Naive thymus-derived CD4-positive, alpha-beta T cell (primary cell): ENCODE measurements at regions of chr1 and their contacts with region 1.

Region 1: GRCh38 chr1:37859507-37860345 is at the start of gene MTF1:
- DNase-seq: peak; percentile 85 to 98 (median 97)
- ATAC-seq: peak; percentile 99
- H3K4me3 ChIP-seq: peak within 1 kb of the TSS; percentile 94
- H3K4me3 Mint-ChIP-seq: peak within 1 kb of the TSS; percentile 89 to 100 (median 96)
- H3K27ac ChIP-seq: peak within 1 kb of the TSS; percentile 89
- H3K27ac Mint-ChIP-seq: peak within 1 kb of the TSS; percentile 90 to 99 (median 95)
- H3K4me1 ChIP-seq: peaks cover 12 to 19% of the 10 kb centered on the region in 2 donors
- H3K4me1 Mint-ChIP-seq: peaks cover 26 to 39% (median 33%) of the 10 kb centered on the region in 7 donors
- H3K27me3 ChIP-seq: no peaks in the 10 kb centered on the region
- H3K27me3 Mint-ChIP-seq: no peaks in the 10 kb centered on the region
- total RNA-seq, gene MTF1: 22.9 to 45.2 (median 27.1) TPM

Region 2: DNA sequence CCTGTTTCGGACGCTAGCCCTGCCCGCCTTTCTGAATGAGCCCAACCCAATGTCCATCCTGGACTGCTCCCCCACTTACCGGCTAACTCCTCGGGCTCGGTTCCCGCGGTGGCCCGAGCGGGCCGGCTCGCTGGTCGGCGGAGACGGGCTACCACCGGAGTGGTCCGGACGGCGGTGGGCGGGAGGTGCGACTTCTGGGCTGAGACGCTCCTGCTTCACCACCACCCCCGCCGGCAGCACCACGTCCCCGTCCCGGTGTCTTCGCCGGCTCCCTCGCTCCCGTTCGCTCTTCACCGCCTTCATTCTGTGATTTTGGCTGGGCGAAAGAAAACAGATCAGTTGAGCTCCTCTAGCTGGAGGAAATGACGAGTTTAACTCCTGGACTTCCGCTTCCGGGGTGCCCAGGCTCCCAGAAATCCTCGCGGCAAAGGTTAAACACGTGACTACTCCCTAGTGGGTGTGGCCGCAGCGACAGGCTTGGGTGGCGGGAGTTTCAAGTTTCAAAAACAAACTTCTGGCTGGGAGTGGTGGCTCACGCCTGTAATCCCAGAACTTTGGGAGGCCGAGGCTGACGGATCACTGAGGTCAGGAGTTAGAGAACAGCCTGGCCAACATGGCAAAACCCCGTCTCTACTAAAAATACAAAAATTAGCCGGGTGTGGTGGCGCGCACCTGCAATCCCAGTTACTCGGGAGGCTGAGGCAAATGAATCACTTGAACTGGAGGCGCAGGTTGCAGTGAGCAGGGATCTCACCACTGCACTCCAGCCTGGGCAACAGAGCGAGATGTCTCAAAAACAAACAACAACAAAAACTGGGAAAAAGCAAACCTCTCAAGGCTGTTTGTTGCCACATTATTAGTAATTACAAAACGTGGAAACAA is 305.6 kb before region 1 on chr1 and contains the start of gene SNIP1:
- CTCF ChIA-PET with region 1: no interaction called
- POLR2A ChIA-PET with region 1: no interaction called
- intact Hi-C with region 1: loop called in 1 of 2 experiments (anchors 1 kb)
- DNase-seq: peak; percentile 67 to 94 (median 92)
- ATAC-seq: peak; percentile 99
- H3K4me3 ChIP-seq: peak within 1 kb of the TSS; percentile 92
- H3K4me3 Mint-ChIP-seq: peak within 1 kb of the TSS; percentile 97 to 100 (median 99)
- H3K27ac ChIP-seq: peak within 1 kb of the TSS; percentile 94
- H3K27ac Mint-ChIP-seq: peak within 1 kb of the TSS; percentile 91 to 99 (median 98)
- H3K4me1 ChIP-seq: peaks cover 10 to 24% of the 10 kb centered on the region in 2 donors
- H3K4me1 Mint-ChIP-seq: peaks cover 23 to 51% (median 45%) of the 10 kb centered on the region in 7 donors
- H3K27me3 ChIP-seq: no peaks in the 10 kb centered on the region
- H3K27me3 Mint-ChIP-seq: peaks cover 0 to 6% (median 0%) of the 10 kb centered on the region in 5 donors
- total RNA-seq, gene SNIP1: 27.8 to 53.6 (median 36.7) TPM

Region 3: GRCh38 chr1:37622131-37622530 is 237.6 kb before region 1 on chr1:
- CTCF ChIA-PET with region 1: no interaction called
- POLR2A ChIA-PET with region 1: no interaction called
- intact Hi-C with region 1: no loop called
- DNase-seq: no peak
- ATAC-seq: no peak
- H3K4me3 ChIP-seq: no peak overlapping the region
- H3K4me3 Mint-ChIP-seq: no peak overlapping the region
- H3K27ac ChIP-seq: no peak overlapping the region
- H3K27ac Mint-ChIP-seq: no peak overlapping the region
- H3K4me1 ChIP-seq: no peaks in the 10 kb centered on the region
- H3K4me1 Mint-ChIP-seq: peaks cover 0 to 1% (median 0%) of the 10 kb centered on the region in 7 donors
- H3K27me3 ChIP-seq: no peaks in the 10 kb centered on the region
- H3K27me3 Mint-ChIP-seq: peaks cover 34 to 44% (median 39%) of the 10 kb centered on the region in 5 donors

Region 4: GRCh38 chr1:37931361-37932158 is 71.8 kb after region 1 on chr1:
- CTCF ChIA-PET with region 1: interaction called, 5 read pairs
- POLR2A ChIA-PET with region 1: no interaction called
- intact Hi-C with region 1: loop called (anchors 2 kb)
- DNase-seq: peak; percentile 92 to 97 (median 96)
- ATAC-seq: peak; percentile 100
- H3K4me3 ChIP-seq: peak overlapping the region; percentile 67
- H3K4me3 Mint-ChIP-seq: peak overlapping the region; percentile 89 to 99 (median 98)
- H3K27ac ChIP-seq: peak overlapping the region; percentile 79
- H3K27ac Mint-ChIP-seq: peak overlapping the region; percentile 78 to 94 (median 87)
- H3K4me1 ChIP-seq: peaks cover 15 to 17% of the 10 kb centered on the region in 2 donors
- H3K4me1 Mint-ChIP-seq: peaks cover 22 to 52% (median 39%) of the 10 kb centered on the region in 7 donors
- H3K27me3 ChIP-seq: no peaks in the 10 kb centered on the region
- H3K27me3 Mint-ChIP-seq: peaks cover 0 to 3% (median 0%) of the 10 kb centered on the region in 5 donors

Region 5: DNA sequence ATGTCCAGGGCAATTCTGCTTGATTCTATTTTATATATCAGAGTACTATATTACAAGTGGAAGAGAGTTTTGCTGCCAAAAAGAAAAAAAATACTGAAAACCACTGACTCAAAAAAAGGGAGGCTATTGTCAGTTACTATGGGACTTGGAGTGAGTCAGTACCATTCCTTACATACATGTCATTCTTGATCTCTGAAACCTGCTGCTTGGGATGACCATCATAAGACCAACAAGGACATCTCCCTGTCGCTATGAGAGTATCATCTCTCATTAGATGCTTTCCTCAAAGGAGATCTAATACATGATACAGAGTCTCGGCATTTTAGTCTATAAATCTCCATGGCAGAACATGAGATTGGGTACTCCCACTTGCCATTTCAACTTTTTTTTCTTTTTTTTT is 99.0 kb after region 1 on chr1:
- CTCF ChIA-PET with region 1: no interaction called
- POLR2A ChIA-PET with region 1: no interaction called
- intact Hi-C with region 1: no loop called
- DNase-seq: no peak
- ATAC-seq: no peak
- H3K4me3 ChIP-seq: no peak overlapping the region
- H3K4me3 Mint-ChIP-seq: no peak overlapping the region
- H3K27ac ChIP-seq: no peak overlapping the region
- H3K27ac Mint-ChIP-seq: peak overlapping the region in 1 of 9 donors; percentile 20
- H3K4me1 ChIP-seq: no peaks in the 10 kb centered on the region
- H3K4me1 Mint-ChIP-seq: peaks cover 0 to 1% (median 0%) of the 10 kb centered on the region in 7 donors
- H3K27me3 ChIP-seq: no peaks in the 10 kb centered on the region
- H3K27me3 Mint-ChIP-seq: no peaks in the 10 kb centered on the region

Region 6: GRCh38 chr1:37995751-37996345 is 136.1 kb after region 1 on chr1:
- CTCF ChIA-PET with region 1: interaction called, 4 read pairs
- POLR2A ChIA-PET with region 1: interaction called, 3 read pairs
- intact Hi-C with region 1: loop called in 1 of 2 experiments (anchors 5 kb)
- DNase-seq: peak in 1 of 9 donors; percentile 56
- ATAC-seq: no peak
- H3K4me3 ChIP-seq: peak overlapping the region; percentile 17
- H3K4me3 Mint-ChIP-seq: peak overlapping the region in 9 of 10 donors; percentile 6 to 88 (median 76)
- H3K27ac ChIP-seq: peak overlapping the region; percentile 62
- H3K27ac Mint-ChIP-seq: peak overlapping the region in 6 of 9 donors; percentile 65 to 95 (median 87)
- H3K4me1 ChIP-seq: peaks cover 0 to 8% of the 10 kb centered on the region in 2 donors
- H3K4me1 Mint-ChIP-seq: peaks cover 22 to 41% (median 29%) of the 10 kb centered on the region in 7 donors
- H3K27me3 ChIP-seq: no peaks in the 10 kb centered on the region
- H3K27me3 Mint-ChIP-seq: no peaks in the 10 kb centered on the region

Region 7: DNA sequence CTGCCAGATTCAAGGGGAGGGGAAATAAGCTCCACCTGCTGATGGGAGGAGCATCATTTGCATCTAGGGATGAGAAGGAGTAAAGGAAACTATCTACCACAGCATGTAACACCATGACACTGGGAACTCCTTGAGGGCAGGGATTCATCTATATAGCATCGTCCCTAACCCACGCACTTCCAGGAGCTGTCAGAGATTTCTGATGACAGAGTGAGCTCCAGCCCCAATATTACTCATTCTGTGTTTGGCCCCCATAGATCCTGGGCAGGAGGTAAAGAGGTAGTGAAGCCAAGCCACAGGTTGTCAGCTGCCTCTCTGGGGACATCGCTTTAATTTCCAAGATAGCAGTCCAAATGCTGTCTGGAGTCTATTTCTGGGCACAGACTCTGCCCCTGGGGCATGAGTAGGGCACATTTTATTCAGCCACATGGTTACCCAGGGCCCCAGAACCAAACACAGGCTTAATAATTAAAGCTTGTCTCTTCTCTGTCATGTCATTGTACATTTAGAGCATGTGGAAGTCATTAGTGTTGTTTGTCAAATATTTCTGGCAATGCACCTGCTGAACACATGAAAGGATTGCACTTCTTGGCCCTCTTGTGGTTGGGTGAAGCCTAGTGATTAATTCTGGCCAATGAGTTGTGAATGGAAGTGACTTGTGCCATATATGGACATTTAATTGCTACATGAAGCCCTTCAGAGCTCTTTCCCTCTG is 292.8 kb after region 1 on chr1:
- CTCF ChIA-PET with region 1: no interaction called
- POLR2A ChIA-PET with region 1: no interaction called
- intact Hi-C with region 1: no loop called
- DNase-seq: no peak
- ATAC-seq: no peak
- H3K4me3 ChIP-seq: no peak overlapping the region
- H3K4me3 Mint-ChIP-seq: no peak overlapping the region
- H3K27ac ChIP-seq: no peak overlapping the region
- H3K27ac Mint-ChIP-seq: no peak overlapping the region
- H3K4me1 ChIP-seq: no peaks in the 10 kb centered on the region
- H3K4me1 Mint-ChIP-seq: no peaks in the 10 kb centered on the region
- H3K27me3 ChIP-seq: no peaks in the 10 kb centered on the region
- H3K27me3 Mint-ChIP-seq: peaks cover 10 to 44% (median 33%) of the 10 kb centered on the region in 5 donors